ENCODE measurements at regions of chr6 and their contacts with region 1.

Region 1: DNA sequence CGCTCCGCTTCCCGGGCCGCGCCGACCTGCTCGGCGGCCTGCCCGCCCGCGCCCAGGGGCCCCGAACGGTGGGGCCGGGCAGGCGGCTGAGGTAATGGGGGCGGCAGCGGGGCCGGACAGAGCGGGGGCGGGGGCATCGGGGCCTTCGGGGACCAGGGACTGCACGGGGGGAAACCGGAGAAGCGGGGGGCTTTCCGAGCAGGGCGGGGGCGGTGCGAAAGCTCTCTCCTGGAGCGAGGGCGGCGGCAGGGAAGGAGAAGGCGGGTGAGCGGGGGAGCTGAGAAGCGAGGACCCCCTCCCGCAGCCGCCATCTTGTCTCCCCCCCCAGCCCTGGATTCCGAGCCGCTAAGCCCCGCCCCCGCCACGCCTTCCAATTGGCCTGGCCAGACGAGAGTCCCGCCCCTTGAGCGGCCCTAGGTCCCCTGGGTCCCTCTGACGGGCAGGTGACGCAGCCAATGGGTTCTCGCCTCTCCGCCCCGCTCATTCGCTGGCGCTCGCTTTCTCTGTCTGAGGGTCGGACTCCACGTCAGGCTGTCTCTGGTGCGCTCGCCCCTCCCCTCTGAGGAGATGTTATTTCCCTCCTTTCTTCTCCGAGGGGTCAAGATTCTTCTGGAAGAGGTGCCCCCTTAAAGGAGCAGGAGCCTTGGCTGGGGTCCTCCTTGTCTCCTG is 470 bp downstream of the BRPF3 start:
- DNase-seq: peak; percentile 97 to 100 (median 99)
- H3K4me3 ChIP-seq: peak overlapping the region; percentile 89
- H3K4me3 Mint-ChIP-seq: peak overlapping the region; percentile 88 to 98 (median 93)
- H3K27ac ChIP-seq: peak overlapping the region; percentile 71
- H3K27ac Mint-ChIP-seq: peak overlapping the region; percentile 89 to 99 (median 91)
- H3K4me1 ChIP-seq: peaks cover 36% of the 10 kb centered on the region
- H3K4me1 Mint-ChIP-seq: peaks cover 42 to 61% (median 54%) of the 10 kb centered on the region in 3 donors
- H3K27me3 ChIP-seq: no peaks in the 10 kb centered on the region
- H3K27me3 Mint-ChIP-seq: no peaks in the 10 kb centered on the region

Region 2: DNA sequence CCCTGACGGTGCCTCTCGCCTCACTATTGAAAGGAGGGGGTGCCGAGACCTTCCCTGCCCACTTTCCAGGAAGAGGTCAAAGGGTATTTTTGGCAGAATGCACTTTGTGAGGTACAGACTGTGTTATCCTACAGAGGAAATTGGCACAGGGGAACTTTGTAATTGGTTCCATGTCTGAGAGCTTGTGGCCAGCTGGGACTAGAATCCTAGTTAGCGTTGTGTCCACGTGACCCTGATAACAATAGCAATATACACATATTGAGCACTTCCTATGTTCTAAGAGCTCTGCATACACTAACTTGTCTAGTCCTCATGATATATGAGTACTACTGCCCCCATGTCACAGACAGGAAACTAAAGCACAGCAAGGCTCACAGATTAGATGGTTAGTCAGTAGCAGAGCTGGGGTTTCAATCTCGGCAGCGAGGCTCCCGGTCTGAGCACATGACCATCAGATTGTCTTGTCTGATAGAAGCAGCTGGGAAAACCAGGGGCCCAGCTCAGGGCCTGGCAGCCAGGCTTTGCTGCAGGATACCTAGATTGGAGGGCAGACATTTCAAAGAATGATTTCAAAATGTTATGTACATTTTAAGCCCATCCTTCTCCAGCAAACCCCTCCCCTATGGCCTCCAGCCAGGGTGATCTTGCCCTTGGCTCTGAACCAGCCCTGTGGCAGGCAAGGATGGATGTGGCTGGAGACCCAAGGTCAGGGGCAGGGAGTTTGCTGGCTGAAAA is 65.3 kb before region 1 on chr6:
- CTCF ChIA-PET with region 1: interaction called, 11 read pairs
- POLR2A ChIA-PET with region 1: interaction called, 11 read pairs
- DNase-seq: peak; percentile 34 to 63 (median 43)
- H3K4me3 ChIP-seq: peak overlapping the region; percentile 86
- H3K4me3 Mint-ChIP-seq: peak overlapping the region; percentile 88 to 96 (median 89)
- H3K27ac ChIP-seq: peak overlapping the region; percentile 49
- H3K27ac Mint-ChIP-seq: peak overlapping the region; percentile 90 to 96 (median 93)
- H3K4me1 ChIP-seq: peaks cover 40% of the 10 kb centered on the region
- H3K4me1 Mint-ChIP-seq: peaks cover 44 to 59% (median 57%) of the 10 kb centered on the region in 3 donors
- H3K27me3 ChIP-seq: no peaks in the 10 kb centered on the region
- H3K27me3 Mint-ChIP-seq: no peaks in the 10 kb centered on the region

Region 3: GRCh38 chr6:36216559-36216958 is 19.5 kb after region 1 on chr6:
- CTCF ChIA-PET with region 1: no interaction called
- POLR2A ChIA-PET with region 1: no interaction called
- DNase-seq: no peak
- H3K4me3 ChIP-seq: no peak overlapping the region
- H3K4me3 Mint-ChIP-seq: no peak overlapping the region
- H3K27ac ChIP-seq: no peak overlapping the region
- H3K27ac Mint-ChIP-seq: peak overlapping the region in 1 of 8 donors; percentile 84
- H3K4me1 ChIP-seq: no peaks in the 10 kb centered on the region
- H3K4me1 Mint-ChIP-seq: peaks cover 0 to 3% (median 0%) of the 10 kb centered on the region in 3 donors
- H3K27me3 ChIP-seq: no peaks in the 10 kb centered on the region
- H3K27me3 Mint-ChIP-seq: no peaks in the 10 kb centered on the region

Measured in CD8-positive, alpha-beta memory T cell (primary cell).